H1 (cell line): ENCODE measurements at regions of chr1 and their contacts with region 1.

Region 1: DNA sequence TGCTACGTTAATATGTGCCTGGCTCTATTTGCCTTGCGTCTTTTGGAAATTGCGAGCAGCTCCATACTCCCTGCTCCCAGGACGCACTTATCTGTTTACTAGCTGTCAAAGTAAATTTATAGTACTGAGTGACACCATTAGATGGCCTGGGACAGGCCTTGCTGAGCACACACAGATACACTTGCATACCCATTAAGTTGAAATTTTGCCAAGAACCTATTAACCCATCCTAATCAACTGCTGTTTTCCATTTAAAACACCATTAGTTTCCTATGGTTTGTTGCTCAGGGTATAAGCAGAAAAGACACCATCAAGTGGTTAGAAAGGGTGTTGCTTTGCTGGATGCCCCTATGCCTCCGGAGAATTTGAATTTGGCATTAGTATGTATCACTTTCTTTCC is 187.3 kb downstream of the SLC44A5 start:
- DNase-seq: no peak
- H3K4me3 ChIP-seq: no peak overlapping the region
- H3K27ac ChIP-seq: no peak overlapping the region
- H3K4me1 ChIP-seq: no peaks in the 10 kb centered on the region
- H3K27me3 ChIP-seq: no peaks in the 10 kb centered on the region
- CTCF ChIP-seq: peak in 2 of 3 experiments; percentile 37 to 57; a peak in 2 of 4 replicates
- EP300 ChIP-seq: no peak
- POLR2A ChIP-seq: no peak
- RAD21 ChIP-seq: peak; percentile 59 to 61

Region 2: DNA sequence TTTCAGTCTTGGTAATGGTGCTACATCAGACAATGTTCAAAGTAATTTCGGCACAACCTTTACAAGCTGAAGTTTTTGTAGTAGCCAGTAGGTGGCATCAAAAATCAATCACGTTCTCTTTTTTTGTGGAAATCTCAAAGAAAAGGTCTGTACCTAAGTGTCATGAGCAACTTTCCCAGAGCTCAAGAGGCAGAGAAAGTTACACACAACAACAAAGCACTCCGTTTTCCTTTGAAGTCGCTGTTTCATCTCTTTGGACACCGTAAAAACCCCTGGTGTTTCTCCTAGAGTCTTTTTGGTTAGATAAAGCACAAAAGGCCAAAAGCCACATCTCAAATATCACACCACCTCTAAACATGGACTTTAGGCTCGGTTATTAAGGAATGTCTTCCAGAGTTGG is 157.8 kb before region 1 on chr1:
- CTCF ChIA-PET with region 1: interaction called, 29 read pairs
- POLR2A ChIA-PET with region 1: no interaction called
- DNase-seq: no peak
- H3K4me3 ChIP-seq: no peak overlapping the region
- H3K27ac ChIP-seq: no peak overlapping the region
- H3K4me1 ChIP-seq: no peaks in the 10 kb centered on the region
- H3K27me3 ChIP-seq: no peaks in the 10 kb centered on the region
- CTCF ChIP-seq: peak in 2 of 3 experiments; percentile 45 to 55; a peak in 2 of 4 replicates
- EP300 ChIP-seq: no peak
- POLR2A ChIP-seq: no peak
- RAD21 ChIP-seq: peak; percentile 78 to 81

Region 3: GRCh38 chr1:75400716-75401115 is 22.9 kb before region 1 on chr1:
- CTCF ChIA-PET with region 1: interaction called, 16 read pairs
- POLR2A ChIA-PET with region 1: no interaction called
- DNase-seq: no peak
- H3K4me3 ChIP-seq: no peak overlapping the region
- H3K27ac ChIP-seq: no peak overlapping the region
- H3K4me1 ChIP-seq: no peaks in the 10 kb centered on the region
- H3K27me3 ChIP-seq: no peaks in the 10 kb centered on the region
- CTCF ChIP-seq: no peak
- EP300 ChIP-seq: no peak
- POLR2A ChIP-seq: no peak
- RAD21 ChIP-seq: no peak